ENCODE measurements at regions of chr17 and their contacts with region 1.

Region 1: DNA sequence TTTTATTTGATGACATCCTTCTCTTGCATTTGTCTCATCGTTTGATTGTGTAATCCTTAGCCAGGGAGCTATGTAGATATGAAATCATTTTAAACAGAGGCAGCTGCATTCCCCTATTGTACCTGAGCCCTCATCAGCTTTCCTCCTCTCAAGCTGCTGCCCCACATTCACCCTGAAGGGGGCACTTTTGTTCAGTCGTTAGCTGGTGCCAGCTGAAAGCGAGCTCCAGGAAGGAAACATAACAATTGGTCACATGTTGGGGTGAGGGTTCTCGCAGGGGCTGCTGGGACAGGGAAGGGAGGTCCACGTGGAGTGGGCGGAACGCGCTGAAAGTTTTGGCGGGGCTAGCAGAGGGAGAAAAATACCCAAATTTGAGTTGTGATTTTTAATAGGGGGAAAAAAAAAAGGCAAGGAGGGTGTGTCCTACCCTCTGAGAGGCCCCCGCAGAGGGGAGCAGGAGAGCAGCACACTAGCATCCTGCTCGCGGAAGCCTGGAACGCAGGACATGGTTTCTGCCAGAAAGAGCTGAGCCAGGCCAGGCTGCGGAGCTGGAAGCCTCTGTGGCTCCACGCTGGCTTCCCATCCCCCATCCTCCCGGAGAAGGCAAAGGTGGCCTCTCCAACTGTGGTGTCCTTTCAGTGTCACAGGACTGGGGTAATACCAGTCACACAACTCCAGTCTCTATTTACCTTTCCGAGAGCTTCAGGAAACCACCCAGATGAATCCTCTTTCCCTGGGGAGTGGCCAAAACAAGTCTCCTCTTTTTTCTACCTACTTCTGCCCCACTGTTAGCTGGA is 8.5 kb upstream of the MSL1 start:
- DNase-seq: peak; percentile 92
- ATAC-seq: peak; percentile 35
- H3K4me3 Mint-ChIP-seq: peak overlapping the region; percentile 58
- H3K27ac Mint-ChIP-seq: peak overlapping the region; percentile 98
- H3K4me1 Mint-ChIP-seq: peaks cover 72% of the 10 kb centered on the region
- H3K27me3 Mint-ChIP-seq: peaks cover 3% of the 10 kb centered on the region
- CTCF ChIP-seq: peak; percentile 66

Region 2: GRCh38 chr17:40021451-40021971 is 91.8 kb before region 1 on chr17:
- CTCF ChIA-PET with region 1: interaction called, 56 read pairs
- POLR2A ChIA-PET with region 1: interaction called, 5 read pairs
- DNase-seq: no peak
- ATAC-seq: no peak
- H3K4me3 Mint-ChIP-seq: no peak overlapping the region
- H3K27ac Mint-ChIP-seq: peak overlapping the region; percentile 53; the same call in 1 of the 2 replicates
- H3K4me1 Mint-ChIP-seq: peaks cover 24% of the 10 kb centered on the region
- H3K27me3 Mint-ChIP-seq: no peaks in the 10 kb centered on the region
- CTCF ChIP-seq: no peak

Region 3: GRCh38 chr17:40062329-40063186 is 50.8 kb before region 1 on chr17 and contains the start of gene THRA:
- CTCF ChIA-PET with region 1: interaction called, 18 read pairs
- POLR2A ChIA-PET with region 1: interaction called, 5 read pairs
- DNase-seq: peak; percentile 53
- ATAC-seq: peak; percentile 64
- H3K4me3 Mint-ChIP-seq: peak within 1 kb of the TSS; percentile 86
- H3K27ac Mint-ChIP-seq: no peak within 1 kb of the TSS
- H3K4me1 Mint-ChIP-seq: peaks cover 62% of the 10 kb centered on the region
- H3K27me3 Mint-ChIP-seq: peaks cover 32% of the 10 kb centered on the region
- CTCF ChIP-seq: no peak
- total RNA-seq, gene THRA: 11.9 to 15.9 TPM (median 12.0 TPM) in 3 replicates

Region 4: DNA sequence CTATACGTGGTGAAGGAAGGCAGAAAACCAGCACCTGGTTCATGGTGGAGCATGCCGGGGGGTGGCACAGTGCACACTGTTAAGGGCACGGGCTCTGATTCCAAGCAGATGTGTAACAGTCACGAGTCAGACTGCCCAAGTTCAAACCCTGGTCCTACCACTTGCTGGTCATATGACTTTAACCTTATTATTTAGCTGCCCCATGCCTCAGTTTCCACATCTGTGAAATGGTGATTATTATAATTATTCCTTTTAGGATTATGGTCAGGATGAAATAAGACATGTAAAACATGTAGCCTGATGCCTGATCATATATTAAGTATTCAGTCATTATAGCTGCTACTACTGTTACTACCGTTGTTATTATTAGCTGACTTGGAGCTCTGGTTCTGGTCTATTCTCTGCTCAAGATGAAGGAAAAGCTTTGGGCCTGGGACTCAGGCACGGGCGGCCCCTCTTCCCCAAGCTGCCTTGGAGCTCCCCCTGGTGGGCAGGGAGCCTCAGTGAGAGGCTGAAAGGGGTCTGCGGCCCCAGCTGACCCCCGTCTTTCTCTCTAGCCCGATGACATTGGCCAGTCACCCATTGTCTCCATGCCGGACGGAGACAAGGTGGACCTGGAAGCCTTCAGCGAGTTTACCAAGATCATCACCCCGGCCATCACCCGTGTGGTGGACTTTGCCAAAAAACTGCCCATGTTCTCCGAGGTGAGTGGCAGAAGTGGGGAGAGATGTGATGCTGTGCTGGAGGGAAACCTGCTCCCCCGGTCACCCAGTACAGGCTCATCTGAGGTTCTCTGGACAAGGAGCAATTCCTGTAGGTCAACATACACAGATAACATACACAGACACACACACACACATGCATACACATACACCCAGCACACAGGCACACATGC is 26.9 kb before region 1 on chr17:
- CTCF ChIA-PET with region 1: interaction called, 65 read pairs
- POLR2A ChIA-PET with region 1: no interaction called
- DNase-seq: peak; percentile 88
- ATAC-seq: peak; percentile 85
- H3K4me3 Mint-ChIP-seq: no peak overlapping the region
- H3K27ac Mint-ChIP-seq: no peak overlapping the region
- H3K4me1 Mint-ChIP-seq: peaks cover 16% of the 10 kb centered on the region
- H3K27me3 Mint-ChIP-seq: no peaks in the 10 kb centered on the region
- CTCF ChIP-seq: peak; percentile 84

Region 5: DNA sequence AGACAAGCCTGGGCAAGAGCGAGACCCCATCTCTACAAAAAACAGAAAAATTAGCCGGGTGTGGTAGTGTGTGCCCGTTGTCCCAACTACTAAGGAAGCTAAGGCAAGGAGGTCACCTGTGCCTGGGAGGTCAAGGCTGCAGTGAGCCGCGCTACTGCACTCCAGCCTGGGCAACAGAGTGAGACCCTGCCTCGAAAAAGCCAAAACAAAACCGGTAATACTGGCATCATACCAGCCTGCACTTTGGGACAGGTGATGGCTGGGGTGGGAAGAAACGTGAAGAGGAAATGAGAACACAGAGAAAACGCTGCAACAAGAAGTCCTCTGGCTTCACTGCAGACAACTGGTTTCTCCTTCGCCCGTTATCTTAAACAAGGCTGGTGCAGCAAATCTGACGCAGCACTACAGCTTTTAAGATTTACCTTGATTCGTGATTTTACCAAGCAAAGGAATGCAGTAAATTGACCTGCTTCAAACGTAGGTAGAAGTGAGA is 26.3 kb after region 1 on chr17:
- CTCF ChIA-PET with region 1: interaction called, 17 read pairs
- POLR2A ChIA-PET with region 1: interaction called, 17 read pairs
- DNase-seq: no peak
- ATAC-seq: no peak
- H3K4me3 Mint-ChIP-seq: peak overlapping the region; percentile 94
- H3K27ac Mint-ChIP-seq: peak overlapping the region; percentile 100
- H3K4me1 Mint-ChIP-seq: peaks cover 19% of the 10 kb centered on the region
- H3K27me3 Mint-ChIP-seq: no peaks in the 10 kb centered on the region
- CTCF ChIP-seq: no peak

Region 6: DNA sequence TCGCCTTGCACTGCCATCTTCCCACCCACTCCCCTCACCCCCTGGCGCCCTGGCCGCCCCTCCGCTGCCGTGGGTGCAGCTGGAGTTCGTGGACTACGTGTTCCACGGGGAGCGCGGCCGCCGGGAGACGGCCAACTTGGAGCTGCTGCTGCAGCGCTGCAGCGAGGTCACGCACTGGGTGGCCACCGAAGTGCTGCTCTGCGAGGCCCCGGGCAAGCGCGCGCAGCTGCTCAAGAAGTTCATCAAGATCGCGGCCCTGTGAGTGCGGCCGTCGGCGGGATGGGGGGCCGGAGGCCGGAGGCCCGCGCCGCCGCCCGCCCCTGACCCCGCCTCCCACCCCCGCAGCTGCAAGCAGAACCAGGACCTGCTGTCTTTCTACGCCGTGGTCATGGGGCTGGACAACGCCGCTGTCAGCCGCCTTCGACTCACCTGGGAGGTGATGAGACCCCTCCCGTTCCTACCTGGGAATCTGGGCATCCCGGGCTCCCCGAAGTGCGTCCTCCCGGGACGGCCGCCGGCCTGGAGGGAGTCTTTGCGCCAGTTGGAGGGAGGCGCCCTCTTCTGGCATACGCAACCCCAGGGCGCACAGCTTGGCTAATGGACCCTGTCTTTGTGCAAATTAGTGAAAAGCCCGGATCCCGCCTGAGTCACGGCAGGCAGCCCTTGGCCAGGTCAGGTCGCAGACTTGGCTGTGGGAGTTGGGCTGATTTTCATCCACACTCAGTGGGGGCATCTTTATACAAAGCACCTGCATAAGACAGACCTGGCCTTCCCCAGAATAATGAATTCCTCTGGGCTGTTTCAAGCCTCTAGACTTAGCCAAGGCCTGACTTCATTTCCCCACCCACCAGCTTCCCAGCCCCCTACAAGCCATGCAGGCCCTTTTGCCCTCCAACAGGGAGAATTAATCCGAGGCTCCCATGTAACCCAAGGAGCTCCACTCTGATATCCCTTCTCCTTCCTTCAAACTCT is 78.2 kb after region 1 on chr17:
- CTCF ChIA-PET with region 1: interaction called, 43 read pairs
- POLR2A ChIA-PET with region 1: interaction called, 3 read pairs
- DNase-seq: peak; percentile 84
- ATAC-seq: peak; percentile 73
- H3K4me3 Mint-ChIP-seq: peak overlapping the region; percentile 82
- H3K27ac Mint-ChIP-seq: no peak overlapping the region
- H3K4me1 Mint-ChIP-seq: peaks cover 37% of the 10 kb centered on the region
- H3K27me3 Mint-ChIP-seq: peaks cover 3% of the 10 kb centered on the region; the same call in 1 of the 2 replicates
- CTCF ChIP-seq: no peak; the same call in 1 of the 2 replicates

Region 7: GRCh38 chr17:40242774-40243173 is 129.5 kb after region 1 on chr17:
- CTCF ChIA-PET with region 1: no interaction called
- POLR2A ChIA-PET with region 1: no interaction called
- DNase-seq: no peak
- ATAC-seq: no peak
- H3K4me3 Mint-ChIP-seq: no peak overlapping the region
- H3K27ac Mint-ChIP-seq: no peak overlapping the region
- H3K4me1 Mint-ChIP-seq: no peaks in the 10 kb centered on the region
- H3K27me3 Mint-ChIP-seq: no peaks in the 10 kb centered on the region
- CTCF ChIP-seq: no peak